K562 (cell line): ENCODE measurements at regions of chr14 and their contacts with region 1.

Region 1: GRCh38 chr14:81427348-81428058 is 27.4 kb upstream of the STON2 start:
- DNase-seq: peak; percentile 61 to 91 (median 69)
- ATAC-seq: peak; percentile 84
- H3K4me3 ChIP-seq: peak overlapping the region; percentile 37
- H3K27ac ChIP-seq: peak overlapping the region; percentile 90
- H3K4me1 ChIP-seq: peaks cover 24 to 73% of the 10 kb centered on the region in 2 experiments
- H3K27me3 ChIP-seq: no peaks in the 10 kb centered on the region
- CTCF ChIP-seq: no peak
- EP300 ChIP-seq: peak; percentile 90
- POLR2A ChIP-seq: peak; percentile 57
- RAD21 ChIP-seq: peak in 1 of 2 experiments; percentile 14; a peak in 1 of 4 replicates

Region 2: DNA sequence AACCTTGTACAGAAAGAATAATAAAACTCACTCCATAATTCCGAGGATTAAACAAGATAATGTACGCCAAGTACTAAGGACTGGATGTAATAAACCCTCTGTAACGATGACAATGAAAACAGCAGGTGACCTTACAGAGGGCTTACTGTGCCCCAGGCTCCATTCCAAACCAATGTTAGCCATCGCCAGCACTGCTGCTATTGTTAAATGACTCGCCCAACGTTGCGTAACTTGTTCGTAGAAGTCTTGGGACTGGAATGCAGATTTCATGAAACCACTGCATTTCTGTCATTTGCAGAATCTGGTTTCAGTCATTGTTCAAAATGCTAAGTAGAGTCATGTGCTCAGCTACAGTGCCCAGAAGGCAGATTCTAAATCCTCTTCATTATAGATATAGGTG is 26.7 kb before region 1 on chr14:
- CTCF ChIA-PET with region 1: no interaction called
- POLR2A ChIA-PET with region 1: interaction called, 7 read pairs
- in situ Hi-C with region 1: no loop called
- intact Hi-C with region 1: loop called (anchors 2 kb)
- DNase-seq: peak in 1 of 4 experiments; percentile 31
- ATAC-seq: 0 out of 3 replicates have a peak, but pooled peaks have one; percentile 6
- H3K4me3 ChIP-seq: no peak overlapping the region
- H3K27ac ChIP-seq: peak overlapping the region; percentile 81; the same call in 2 of the 3 replicates
- H3K4me1 ChIP-seq: peaks cover 4 to 42% of the 10 kb centered on the region in 2 experiments
- H3K27me3 ChIP-seq: no peaks in the 10 kb centered on the region
- CTCF ChIP-seq: no peak
- EP300 ChIP-seq: no peak
- POLR2A ChIP-seq: no peak
- RAD21 ChIP-seq: no peak